CD8-positive, alpha-beta T cell (primary cell): ENCODE measurements at regions of chr5 and their contacts with region 1.

Region 1: DNA sequence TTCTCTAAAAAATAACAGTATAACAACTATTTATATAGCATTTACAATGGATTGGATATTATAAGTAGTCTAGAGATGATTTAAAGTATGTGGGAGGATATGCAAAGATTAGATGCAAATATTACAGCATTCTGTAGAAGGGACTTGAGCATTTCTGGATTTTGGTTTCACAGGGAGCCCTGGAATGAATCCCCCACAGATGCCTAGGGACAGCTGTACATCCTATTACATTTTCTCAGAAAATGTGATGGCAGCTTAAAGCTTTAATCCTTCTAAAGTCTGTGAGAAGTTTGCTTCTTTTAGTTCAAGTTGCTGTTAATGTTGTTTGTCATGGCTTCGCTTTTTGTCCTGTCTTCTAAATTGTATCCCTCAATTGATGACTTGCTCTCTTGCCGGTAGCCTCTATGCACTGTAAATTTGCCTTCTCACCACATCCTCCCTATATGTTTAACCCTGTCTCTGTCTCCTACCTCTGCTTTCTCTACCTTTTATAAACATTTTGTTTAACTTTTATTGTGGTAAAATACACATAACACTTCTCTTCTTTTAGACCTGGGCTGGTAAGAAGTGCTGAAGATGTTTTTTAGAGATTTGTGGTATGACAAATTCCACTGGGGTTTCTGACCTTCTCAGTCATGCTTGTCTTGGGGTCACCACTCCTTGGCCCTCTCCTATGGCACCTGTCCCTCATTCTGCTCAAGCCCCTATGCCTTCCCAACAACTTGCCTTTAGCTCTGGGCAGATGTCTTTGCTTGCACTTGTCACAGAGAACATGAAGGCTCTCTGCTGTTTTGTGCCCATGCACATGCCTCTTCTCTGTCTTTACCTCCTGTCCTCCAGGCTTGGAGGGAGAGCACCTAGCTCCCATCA is 37.9 kb downstream of the LNPEP start:
- DNase-seq: peak in 2 of 9 experiments; percentile 18 to 47
- ATAC-seq: peak; percentile 86
- H3K4me3 ChIP-seq: peak overlapping the region; percentile 18 to 29
- H3K4me3 Mint-ChIP-seq: peak overlapping the region; percentile 60
- H3K27ac ChIP-seq: peak overlapping the region in 1 of 2 experiments; percentile 21
- H3K27ac Mint-ChIP-seq: peak overlapping the region; percentile 43
- H3K4me1 ChIP-seq: peaks cover 84% of the 10 kb centered on the region
- H3K4me1 Mint-ChIP-seq: peaks cover 86% of the 10 kb centered on the region
- H3K27me3 ChIP-seq: no peaks in the 10 kb centered on the region
- H3K27me3 Mint-ChIP-seq: no peaks in the 10 kb centered on the region
- CTCF ChIP-seq: no peak

Region 2: GRCh38 chr5:96702503-96703383 is 271.0 kb before region 1 on chr5:
- CTCF ChIA-PET with region 1: no interaction called
- POLR2A ChIA-PET with region 1: no interaction called
- intact Hi-C with region 1: no loop called
- DNase-seq: peak; percentile 49 to 91 (median 72)
- ATAC-seq: peak; percentile 82
- H3K4me3 ChIP-seq: peak overlapping the region; percentile 72 to 76
- H3K4me3 Mint-ChIP-seq: peak overlapping the region; percentile 82
- H3K27ac ChIP-seq: peak overlapping the region; percentile 73 to 82
- H3K27ac Mint-ChIP-seq: peak overlapping the region; percentile 94
- H3K4me1 ChIP-seq: peaks cover 7% of the 10 kb centered on the region
- H3K4me1 Mint-ChIP-seq: peaks cover 30% of the 10 kb centered on the region
- H3K27me3 ChIP-seq: no peaks in the 10 kb centered on the region
- H3K27me3 Mint-ChIP-seq: no peaks in the 10 kb centered on the region
- CTCF ChIP-seq: no peak

Region 3: DNA sequence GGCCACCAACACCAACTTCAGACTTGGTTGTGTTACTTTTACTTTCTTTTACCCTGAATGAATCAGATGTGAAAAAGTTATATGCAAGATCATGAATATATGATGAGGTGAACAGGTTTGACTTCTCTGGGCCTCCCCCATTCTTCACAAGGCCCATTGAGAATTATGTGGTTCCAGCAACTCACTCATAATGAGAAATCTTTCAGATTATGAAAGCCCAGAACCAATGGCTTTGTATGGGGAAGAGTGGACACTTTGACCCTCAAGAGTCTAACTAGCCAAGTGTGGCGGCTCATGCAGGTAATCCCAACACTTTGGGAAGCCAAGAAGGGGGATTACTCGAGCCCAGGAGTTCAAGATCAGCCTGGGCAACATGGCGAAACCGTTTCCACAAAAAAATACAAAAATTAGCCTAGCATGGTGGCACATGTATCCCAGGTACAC is 54.0 kb before region 1 on chr5:
- CTCF ChIA-PET with region 1: no interaction called
- POLR2A ChIA-PET with region 1: no interaction called
- intact Hi-C with region 1: no loop called
- DNase-seq: no peak
- ATAC-seq: no peak
- H3K4me3 ChIP-seq: no peak overlapping the region
- H3K4me3 Mint-ChIP-seq: no peak overlapping the region
- H3K27ac ChIP-seq: no peak overlapping the region
- H3K27ac Mint-ChIP-seq: peak overlapping the region; percentile 69
- H3K4me1 ChIP-seq: peaks cover 26% of the 10 kb centered on the region
- H3K4me1 Mint-ChIP-seq: peaks cover 42% of the 10 kb centered on the region
- H3K27me3 ChIP-seq: no peaks in the 10 kb centered on the region
- H3K27me3 Mint-ChIP-seq: no peaks in the 10 kb centered on the region
- CTCF ChIP-seq: no peak

Region 4: GRCh38 chr5:96957254-96958049 is 16.3 kb before region 1 on chr5:
- CTCF ChIA-PET with region 1: no interaction called
- POLR2A ChIA-PET with region 1: interaction called, 3 read pairs
- intact Hi-C with region 1: loop called in 1 of 2 experiments (anchors 1 kb)
- DNase-seq: peak in 2 of 9 experiments; percentile 37 to 58
- ATAC-seq: peak; percentile 30
- H3K4me3 ChIP-seq: no peak overlapping the region
- H3K4me3 Mint-ChIP-seq: peak overlapping the region; percentile 67
- H3K27ac ChIP-seq: peak overlapping the region; percentile 7 to 63
- H3K27ac Mint-ChIP-seq: peak overlapping the region; percentile 90
- H3K4me1 ChIP-seq: peaks cover 72% of the 10 kb centered on the region
- H3K4me1 Mint-ChIP-seq: peaks cover 81% of the 10 kb centered on the region
- H3K27me3 ChIP-seq: no peaks in the 10 kb centered on the region
- H3K27me3 Mint-ChIP-seq: no peaks in the 10 kb centered on the region
- CTCF ChIP-seq: no peak

Region 5: GRCh38 chr5:96963267-96963666 is 10.5 kb before region 1 on chr5:
- CTCF ChIA-PET with region 1: interaction called, 3 read pairs
- POLR2A ChIA-PET with region 1: interaction called, 3 read pairs
- intact Hi-C with region 1: loop called in 1 of 2 experiments (anchors 1 kb)
- DNase-seq: peak in 4 of 9 experiments; percentile 22 to 58 (median 26)
- ATAC-seq: peak; percentile 39
- H3K4me3 ChIP-seq: no peak overlapping the region
- H3K4me3 Mint-ChIP-seq: peak overlapping the region; percentile 68
- H3K27ac ChIP-seq: peak overlapping the region; percentile 30 to 44
- H3K27ac Mint-ChIP-seq: peak overlapping the region; percentile 94
- H3K4me1 ChIP-seq: peaks cover 68% of the 10 kb centered on the region
- H3K4me1 Mint-ChIP-seq: peaks cover 80% of the 10 kb centered on the region
- H3K27me3 ChIP-seq: no peaks in the 10 kb centered on the region
- H3K27me3 Mint-ChIP-seq: no peaks in the 10 kb centered on the region
- CTCF ChIP-seq: no peak

Region 6: GRCh38 chr5:96997265-96997859 is 23.6 kb after region 1 on chr5:
- CTCF ChIA-PET with region 1: interaction called, 4 read pairs
- POLR2A ChIA-PET with region 1: no interaction called
- intact Hi-C with region 1: loop called in 1 of 2 experiments (anchors 2 kb)
- DNase-seq: peak in 4 of 9 experiments; percentile 19 to 62 (median 35)
- ATAC-seq: peak; percentile 77
- H3K4me3 ChIP-seq: no peak overlapping the region
- H3K4me3 Mint-ChIP-seq: no peak overlapping the region
- H3K27ac ChIP-seq: no peak overlapping the region
- H3K27ac Mint-ChIP-seq: peak overlapping the region; percentile 17
- H3K4me1 ChIP-seq: no peaks in the 10 kb centered on the region
- H3K4me1 Mint-ChIP-seq: peaks cover 42% of the 10 kb centered on the region
- H3K27me3 ChIP-seq: no peaks in the 10 kb centered on the region
- H3K27me3 Mint-ChIP-seq: no peaks in the 10 kb centered on the region
- CTCF ChIP-seq: peak; percentile 73